AG04450 (cell line): ENCODE measurements at regions of chr7 and their contacts with region 1.

Region 1: DNA sequence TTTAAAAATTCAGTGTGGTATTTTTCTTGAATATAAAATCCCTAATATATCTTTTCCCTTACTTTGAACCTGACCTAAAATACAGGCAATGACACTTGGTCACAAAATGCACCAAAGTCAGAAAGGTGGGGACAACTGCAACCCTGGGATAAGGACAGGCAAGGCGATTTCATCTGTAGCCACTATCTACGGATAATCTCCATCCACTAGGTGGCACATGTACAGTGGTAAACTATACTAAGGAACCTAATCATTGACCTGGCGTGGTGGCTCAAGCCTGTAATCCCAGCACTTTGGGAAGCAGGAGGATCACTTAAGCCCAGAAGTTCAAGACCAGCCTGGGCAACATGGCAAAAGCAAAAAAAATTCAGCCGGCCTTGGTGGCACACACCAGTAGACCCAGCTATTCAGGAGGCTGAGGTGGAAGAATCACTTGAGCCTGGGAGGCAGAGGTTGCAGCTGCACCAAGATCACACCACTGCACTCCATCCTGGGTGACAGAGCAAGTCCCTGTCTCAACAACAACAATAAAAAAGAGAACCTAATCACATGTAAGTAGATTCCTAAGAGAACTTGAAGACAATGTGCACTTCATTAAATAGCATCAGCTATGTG is 98.9 kb downstream of the KMT2C start:
- DNase-seq: no peak
- H3K4me3 ChIP-seq: no peak overlapping the region
- H3K27ac ChIP-seq: no peak overlapping the region
- H3K27me3 ChIP-seq: no peaks in the 10 kb centered on the region
- CTCF ChIP-seq: peak; percentile 53

Region 2: DNA sequence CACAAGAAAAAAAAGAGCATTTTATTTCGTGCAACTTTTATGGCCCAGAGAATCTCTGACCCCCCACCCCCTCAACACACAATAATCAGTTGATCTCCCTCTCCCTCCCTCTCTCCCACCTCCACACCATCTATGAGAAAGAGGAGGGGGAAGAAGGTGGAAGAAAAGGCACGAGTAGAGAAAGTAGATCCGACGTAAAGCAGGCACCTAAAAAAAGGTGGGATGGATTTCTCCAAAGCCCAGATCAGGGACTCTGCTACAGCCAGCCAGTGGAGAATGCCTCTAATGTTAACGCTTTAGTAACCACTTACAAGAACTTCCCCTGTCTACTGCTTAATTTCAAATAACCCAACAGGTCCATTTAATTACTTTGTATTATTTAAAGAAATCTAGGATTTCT is 74.5 kb after region 1 on chr7:
- CTCF ChIA-PET with region 1: no interaction called
- POLR2A ChIA-PET with region 1: no interaction called
- DNase-seq: no peak
- H3K4me3 ChIP-seq: no peak overlapping the region
- H3K27ac ChIP-seq: no peak overlapping the region
- H3K27me3 ChIP-seq: no peaks in the 10 kb centered on the region
- CTCF ChIP-seq: no peak

Region 3: DNA sequence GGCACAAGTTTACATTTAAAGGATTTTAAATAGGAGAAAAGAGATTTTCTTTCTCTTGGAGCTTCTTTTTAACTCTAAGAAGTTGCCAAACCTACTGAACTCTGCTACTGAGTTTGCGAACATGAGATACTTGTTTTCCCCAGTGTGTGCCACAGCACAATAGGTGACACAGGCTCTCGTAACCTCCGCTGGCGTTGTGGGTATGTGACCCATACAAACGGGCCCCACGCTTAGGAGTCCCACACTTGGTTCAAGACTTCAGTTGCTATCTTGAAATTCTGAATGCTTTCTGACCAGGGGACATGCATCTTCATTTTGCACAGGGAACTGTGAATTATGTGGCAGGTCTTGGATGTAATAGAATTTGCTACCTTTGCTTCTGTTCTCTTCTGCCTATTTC is 370.9 kb after region 1 on chr7:
- CTCF ChIA-PET with region 1: interaction called, 25 read pairs
- POLR2A ChIA-PET with region 1: no interaction called
- DNase-seq: no peak
- H3K4me3 ChIP-seq: no peak overlapping the region
- H3K27ac ChIP-seq: no peak overlapping the region
- H3K27me3 ChIP-seq: no peaks in the 10 kb centered on the region
- CTCF ChIP-seq: no peak